GM10248 (cell line): ENCODE measurements at regions of chr17 and their contacts with region 1.

Region 1: DNA sequence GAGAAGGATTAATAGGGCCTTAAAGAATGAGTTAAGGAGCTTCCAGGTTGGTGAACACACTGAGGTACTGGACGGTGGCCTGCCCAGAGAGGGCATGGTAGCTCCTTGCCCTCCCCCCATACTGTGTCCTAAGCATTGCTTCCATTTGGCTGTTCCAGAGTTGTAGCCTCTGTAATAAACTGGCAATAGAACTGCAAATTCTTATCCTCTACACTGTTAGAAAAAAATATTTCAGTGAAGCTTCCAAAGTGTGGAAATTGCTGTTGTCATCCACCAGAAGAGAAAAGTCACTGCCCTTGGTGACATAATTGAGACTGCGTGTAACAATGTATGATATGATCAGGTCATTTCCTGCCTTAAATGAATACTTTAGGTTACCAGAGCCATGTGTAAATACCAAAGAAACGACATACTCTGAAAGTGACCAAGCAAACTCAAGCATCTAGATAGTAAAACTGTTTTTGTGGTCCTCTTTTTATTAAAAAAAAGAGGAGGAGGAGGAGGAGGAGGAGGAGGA is 65.9 kb downstream of the CEP95 start:
- DNase-seq: no peak
- CTCF ChIP-seq: no peak

Region 2: DNA sequence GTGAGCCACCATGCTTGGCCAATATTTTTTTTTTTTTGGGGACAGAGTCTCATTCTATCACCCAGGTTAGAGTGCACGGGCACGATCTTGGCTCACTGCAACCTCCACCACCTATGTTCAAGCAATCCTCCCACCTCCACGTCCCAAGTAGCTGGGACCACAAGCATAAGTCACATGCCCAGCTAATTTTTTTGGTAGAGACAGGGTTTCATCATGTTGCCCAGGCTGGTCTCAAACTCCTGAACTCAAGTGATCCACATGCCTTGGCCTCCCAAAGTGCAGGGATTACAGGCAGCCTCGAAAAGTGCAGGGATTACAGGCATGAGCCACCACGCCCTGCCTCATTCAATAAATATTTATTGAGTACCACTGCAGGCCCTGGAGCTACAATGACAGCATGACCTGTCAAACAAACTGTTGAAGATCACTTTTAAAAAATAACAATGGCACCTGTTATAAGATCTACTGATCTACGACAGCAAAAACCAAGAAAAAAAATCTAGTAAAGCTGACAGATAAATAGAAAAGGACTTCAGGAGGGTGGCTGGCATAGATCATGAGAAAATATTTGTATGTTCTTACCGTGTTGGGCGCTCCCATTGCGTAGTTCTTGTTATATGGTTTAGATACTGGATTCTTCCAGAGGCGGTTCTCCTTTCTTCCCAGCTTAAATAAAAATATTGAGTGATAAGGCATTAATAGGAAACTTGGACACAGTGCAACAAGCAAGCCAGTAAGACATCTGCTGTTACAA is 10.4 kb after region 1 on chr17:
- CTCF ChIA-PET with region 1: interaction called, 15 read pairs
- POLR2A ChIA-PET with region 1: no interaction called
- DNase-seq: no peak
- CTCF ChIP-seq: no peak